ENCODE measurements at regions of chr4 and their contacts with region 1.

Region 1: GRCh38 chr4:176195184-176195978 is at the start of gene SPATA4:
- DNase-seq: peak; percentile 85
- H3K4me3 ChIP-seq: peak within 1 kb of the TSS; percentile 55
- H3K27ac ChIP-seq: peak within 1 kb of the TSS; percentile 18
- H3K4me1 ChIP-seq: peaks cover 6% of the 10 kb centered on the region
- CTCF ChIP-seq: no peak
- total RNA-seq, gene SPATA4: not detected in 2 replicates

Region 2: GRCh38 chr4:175833574-175834311 is 361.6 kb before region 1 on chr4:
- CTCF ChIA-PET with region 1: no interaction called
- POLR2A ChIA-PET with region 1: no interaction called
- intact Hi-C with region 1: no loop called
- DNase-seq: peak; percentile 73
- H3K4me3 ChIP-seq: peak overlapping the region; percentile 44
- H3K27ac ChIP-seq: peak overlapping the region; percentile 75
- H3K4me1 ChIP-seq: peaks cover 25% of the 10 kb centered on the region
- CTCF ChIP-seq: no peak; the same call in 1 of the 2 replicates

Region 3: DNA sequence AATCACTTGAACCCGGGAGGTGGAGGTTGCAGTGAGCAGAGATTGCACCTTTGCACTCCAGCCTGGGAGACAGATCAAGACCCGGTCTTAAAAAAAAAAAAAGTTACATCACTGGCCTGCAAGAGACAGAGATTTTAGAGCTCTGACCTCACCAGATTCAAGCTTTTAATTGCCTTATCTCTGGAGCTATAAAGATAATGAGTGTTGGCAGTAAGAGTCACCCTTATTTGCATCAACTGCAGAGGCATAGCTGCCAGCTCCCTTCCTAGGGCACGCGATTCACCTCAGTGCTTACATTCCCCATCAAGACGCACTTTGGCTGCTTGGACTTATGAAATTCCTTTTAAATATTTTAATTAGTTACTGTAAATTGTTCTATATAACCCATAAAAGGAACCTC is 12.5 kb after region 1 on chr4:
- CTCF ChIA-PET with region 1: interaction called, 3 read pairs
- POLR2A ChIA-PET with region 1: interaction called, 15 read pairs
- intact Hi-C with region 1: no loop called
- DNase-seq: no peak
- H3K4me3 ChIP-seq: no peak overlapping the region
- H3K27ac ChIP-seq: no peak overlapping the region
- H3K4me1 ChIP-seq: no peaks in the 10 kb centered on the region
- CTCF ChIP-seq: no peak

Region 4: DNA sequence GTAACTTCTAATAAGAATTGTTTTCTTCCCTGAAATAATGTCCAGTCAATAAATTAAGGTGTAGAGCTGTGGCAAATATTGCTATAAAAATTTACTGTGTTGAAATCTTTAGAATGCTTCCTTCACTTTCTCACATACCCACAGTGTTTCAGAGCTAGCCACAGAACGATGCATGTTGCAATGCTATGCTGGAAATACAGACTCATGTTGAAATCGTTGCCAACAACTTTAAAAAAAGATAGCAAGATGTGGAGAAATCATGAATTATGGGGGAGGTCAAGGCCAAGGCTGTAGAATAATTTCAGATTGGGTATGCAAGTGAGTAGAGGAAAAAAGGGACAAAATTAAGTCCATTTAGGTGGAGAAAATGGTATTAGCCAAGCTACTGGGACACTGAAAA is 392.5 kb after region 1 on chr4:
- CTCF ChIA-PET with region 1: no interaction called
- POLR2A ChIA-PET with region 1: no interaction called
- intact Hi-C with region 1: no loop called
- DNase-seq: no peak
- H3K4me3 ChIP-seq: no peak overlapping the region
- H3K27ac ChIP-seq: no peak overlapping the region
- H3K4me1 ChIP-seq: no peaks in the 10 kb centered on the region
- CTCF ChIP-seq: no peak

Measured in OCI-LY7 (cell line).